ENCODE measurements at regions of chr3 and their contacts with region 1.

Region 1: DNA sequence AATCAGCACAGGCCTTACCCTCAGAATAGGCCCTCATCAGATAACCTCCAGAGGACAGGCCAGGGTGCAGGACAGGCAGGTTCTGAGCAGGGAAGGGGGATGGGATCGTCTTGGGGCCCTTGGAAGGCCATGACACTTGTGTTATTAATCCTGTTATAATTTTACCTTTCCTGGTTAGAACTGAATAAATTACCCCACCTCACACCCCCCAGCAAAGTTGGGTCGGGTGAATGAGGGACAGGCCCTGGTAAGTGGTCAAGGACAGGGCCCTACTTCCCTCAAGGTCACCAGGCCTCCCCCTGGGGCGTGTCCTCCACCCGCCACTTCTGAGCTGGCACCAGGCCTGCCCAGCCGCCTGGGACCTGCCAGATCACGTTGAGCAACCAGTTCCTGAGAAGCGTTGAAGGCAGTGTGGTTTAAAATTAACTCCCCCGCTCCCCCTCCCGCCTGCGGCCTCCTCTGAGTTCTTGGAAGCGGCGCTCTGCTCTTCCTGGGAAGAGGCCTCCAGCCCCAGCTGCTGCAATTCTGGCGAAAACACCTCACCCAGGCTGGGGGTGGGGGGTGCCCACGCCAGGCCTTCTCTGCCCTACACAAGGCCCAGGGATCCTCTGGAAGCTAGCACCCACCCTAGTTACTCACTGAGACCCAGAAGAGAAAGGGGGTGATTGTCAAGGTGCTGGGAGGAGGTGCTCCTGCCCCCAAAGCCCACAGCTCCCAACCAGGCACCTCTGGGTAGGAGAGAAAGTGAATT is 10.6 kb downstream of the CISH start:
- DNase-seq: peak; percentile 81
- H3K4me3 Mint-ChIP-seq: peak overlapping the region; percentile 99
- H3K27ac Mint-ChIP-seq: peak overlapping the region; percentile 98
- H3K4me1 Mint-ChIP-seq: peaks cover 83% of the 10 kb centered on the region
- H3K27me3 Mint-ChIP-seq: no peaks in the 10 kb centered on the region

Region 2: DNA sequence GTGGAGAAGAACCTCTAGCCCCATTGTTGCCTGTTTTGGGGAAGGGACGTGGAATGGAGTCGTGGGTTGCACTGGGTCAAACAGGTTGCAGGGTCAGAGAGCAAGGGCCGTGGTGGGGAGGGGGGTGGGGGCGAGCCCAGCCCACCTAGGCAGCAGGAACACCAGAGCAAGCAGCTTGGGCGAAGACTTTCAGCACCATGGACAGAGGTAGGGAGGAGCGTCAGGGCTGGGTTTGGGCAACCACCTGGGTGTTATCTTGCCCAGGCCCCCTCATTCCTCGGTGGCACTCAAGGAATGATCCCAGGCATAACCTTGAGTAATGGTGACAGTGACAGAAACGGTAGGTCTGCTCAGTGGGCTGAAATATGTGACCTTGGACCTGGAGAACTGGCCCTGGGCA is 195.8 kb before region 1 on chr3:
- intact Hi-C with region 1: no loop called
- DNase-seq: peak; percentile 19
- H3K4me3 Mint-ChIP-seq: no peak overlapping the region
- H3K27ac Mint-ChIP-seq: no peak overlapping the region
- H3K4me1 Mint-ChIP-seq: no peaks in the 10 kb centered on the region
- H3K27me3 Mint-ChIP-seq: peaks cover 3% of the 10 kb centered on the region

Region 3: GRCh38 chr3:50525987-50526386 is 75.0 kb before region 1 on chr3:
- intact Hi-C with region 1: no loop called
- DNase-seq: peak; percentile 55
- H3K4me3 Mint-ChIP-seq: no peak overlapping the region
- H3K27ac Mint-ChIP-seq: no peak overlapping the region
- H3K4me1 Mint-ChIP-seq: no peaks in the 10 kb centered on the region
- H3K27me3 Mint-ChIP-seq: peaks cover 20% of the 10 kb centered on the region

Region 4: GRCh38 chr3:50587806-50588758 is 12.9 kb before region 1 on chr3:
- intact Hi-C with region 1: loop called (anchors 1 kb)
- DNase-seq: peak; percentile 67
- H3K4me3 Mint-ChIP-seq: peak overlapping the region; percentile 58
- H3K27ac Mint-ChIP-seq: peak overlapping the region; percentile 88
- H3K4me1 Mint-ChIP-seq: peaks cover 87% of the 10 kb centered on the region
- H3K27me3 Mint-ChIP-seq: no peaks in the 10 kb centered on the region

Region 5: DNA sequence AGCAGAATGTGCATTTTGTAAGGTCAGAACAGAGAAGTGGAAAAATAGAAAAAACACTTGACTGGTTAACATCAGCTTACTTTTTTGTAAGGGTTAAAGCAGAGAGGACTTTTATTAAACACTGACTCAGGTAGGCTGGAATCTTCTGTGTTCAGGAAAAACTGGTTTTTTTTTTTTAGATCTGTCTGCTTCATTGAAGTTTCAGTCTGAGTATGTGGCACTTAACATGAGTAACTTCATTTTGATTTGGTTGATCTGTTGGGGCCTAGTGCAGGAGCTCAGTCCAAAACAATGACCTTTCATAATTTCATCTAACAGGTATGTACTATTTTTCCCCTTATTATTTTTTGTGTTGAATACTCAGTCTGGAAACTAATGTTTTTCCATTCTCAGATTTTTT is 214.9 kb after region 1 on chr3:
- intact Hi-C with region 1: no loop called
- DNase-seq: no peak
- H3K4me3 Mint-ChIP-seq: no peak overlapping the region
- H3K27ac Mint-ChIP-seq: no peak overlapping the region
- H3K4me1 Mint-ChIP-seq: no peaks in the 10 kb centered on the region
- H3K27me3 Mint-ChIP-seq: peaks cover under 1% of the 10 kb centered on the region

Measured in activated T-helper 1 cell treated with anti-CD3 and anti-CD28 coated beads, Interleukin-12 subunit alpha, Interleukin-12 subunit beta, Interleukin-2, Interleukin-4 antibody, amounts not matched to agents 30 ng/mL and 10 ng/mL and 1 ng/mL, durations not matched to agents 14 hours and 24 hours and 36 hours (primary cell).